Ascending aorta (tissue), 2 donors: ENCODE measurements at regions of chr7 and their contacts with region 1.

Region 1: DNA sequence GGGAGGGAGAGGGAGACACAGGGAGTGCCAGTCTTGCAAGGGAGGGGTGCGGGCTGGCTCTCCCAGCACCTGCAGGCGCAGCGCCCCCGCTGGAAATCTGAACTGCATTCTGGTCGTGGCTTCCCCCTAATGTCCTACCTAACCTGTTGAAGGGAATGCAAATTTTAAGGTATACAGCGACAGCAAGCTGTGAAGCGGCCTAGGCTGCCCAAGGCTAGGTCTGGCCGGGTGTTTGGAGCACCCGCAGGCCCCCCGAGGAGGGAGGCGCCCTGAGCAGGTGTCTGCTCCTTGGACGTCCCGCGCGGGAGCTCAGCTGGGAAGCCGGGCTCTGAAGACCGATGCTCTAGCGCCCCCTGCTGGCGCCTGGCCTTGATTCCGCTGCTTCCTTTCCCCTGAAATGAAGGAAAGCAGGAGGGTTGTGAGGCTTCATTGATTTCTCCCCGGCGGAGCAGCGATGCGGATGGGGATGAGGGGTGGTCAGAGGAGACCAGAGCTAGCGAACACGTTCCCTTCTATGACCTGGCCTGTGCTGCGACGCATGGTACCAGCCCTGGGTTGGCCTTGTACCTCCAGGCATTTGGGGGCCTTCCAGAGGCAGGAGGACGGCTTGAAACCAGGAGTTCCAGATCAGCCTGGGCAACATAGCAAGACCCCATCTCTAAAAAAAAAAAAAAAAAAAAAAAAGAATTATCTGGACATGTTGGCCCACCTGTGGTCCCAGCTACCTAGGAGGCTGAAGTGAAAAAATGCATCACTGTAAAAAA is 601.3 kb downstream of the GALNT17 start:
- DNase-seq: peak in 1 of 2 donors; percentile 78
- H3K4me3 ChIP-seq: peak overlapping the region in 1 of 2 donors; percentile 43
- H3K27ac ChIP-seq: no peak overlapping the region
- H3K4me1 ChIP-seq: no peaks in the 10 kb centered on the region
- H3K27me3 ChIP-seq: no peaks in the 10 kb centered on the region
- CTCF ChIP-seq: peak; percentile 79 to 92 (median 87)

Region 2: GRCh38 chr7:70829221-70830059 is 903.8 kb before region 1 on chr7:
- intact Hi-C with region 1: loop called (anchors 1 kb)
- DNase-seq: peak in 1 of 2 donors; percentile 70
- H3K4me3 ChIP-seq: peak overlapping the region in 1 of 2 donors; percentile 43
- H3K27ac ChIP-seq: no peak overlapping the region
- H3K4me1 ChIP-seq: no peaks in the 10 kb centered on the region
- H3K27me3 ChIP-seq: no peaks in the 10 kb centered on the region
- CTCF ChIP-seq: peak; percentile 58 to 90 (median 88)

Region 3: DNA sequence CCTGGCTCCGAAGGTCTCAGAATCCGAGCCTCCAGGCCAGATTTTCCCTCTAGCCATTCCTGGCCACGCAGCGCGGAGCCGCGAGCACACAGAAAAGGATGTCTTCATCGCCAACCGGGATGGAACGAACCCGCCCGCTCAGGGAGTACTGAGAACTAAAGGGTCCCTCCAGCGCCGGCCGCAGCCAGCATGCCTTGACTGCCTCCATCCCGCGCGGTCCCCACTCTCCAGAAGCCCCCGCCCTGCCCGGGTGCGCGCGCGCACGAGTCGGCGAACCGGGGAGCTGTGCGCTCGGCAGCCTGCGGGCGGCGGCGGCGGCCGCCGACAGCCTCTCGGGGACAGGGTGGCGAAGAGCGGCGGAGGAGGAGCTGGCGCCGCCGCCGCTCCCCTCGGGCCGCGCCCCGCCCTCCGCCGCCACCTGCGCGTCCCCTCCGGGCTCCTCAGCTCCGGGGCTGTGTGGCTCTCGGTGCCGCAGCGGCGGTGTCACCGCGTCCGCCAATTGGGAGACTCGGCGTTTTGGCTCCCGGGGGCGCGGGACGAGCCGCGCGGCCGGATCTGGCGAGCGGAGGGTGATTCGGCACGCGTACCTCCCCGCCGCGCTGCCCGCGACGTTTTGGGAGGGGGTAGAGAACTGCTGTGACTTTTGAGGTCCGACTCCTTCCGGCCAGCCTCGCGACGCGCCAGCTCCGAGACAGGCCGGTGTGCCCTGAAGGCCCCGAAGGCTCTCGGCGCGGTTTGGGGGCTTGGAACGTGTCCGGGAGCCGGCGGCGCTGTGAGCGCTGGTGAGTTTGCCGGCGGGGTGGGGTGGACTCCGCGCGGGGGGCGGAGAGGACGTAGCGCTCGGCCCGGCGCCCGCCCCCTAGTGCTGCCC is 601.8 kb before region 1 on chr7:
- intact Hi-C with region 1: loop called (anchors 5 kb)
- DNase-seq: peak in 1 of 2 donors; percentile 76
- H3K4me3 ChIP-seq: peak overlapping the region; percentile 77 to 81
- H3K27ac ChIP-seq: peak overlapping the region; percentile 46 to 73
- H3K4me1 ChIP-seq: peaks cover 0 to 3% of the 10 kb centered on the region in 2 donors
- H3K27me3 ChIP-seq: no peaks in the 10 kb centered on the region
- CTCF ChIP-seq: peak in 2 of 3 experiments; percentile 23 to 36

Region 4: DNA sequence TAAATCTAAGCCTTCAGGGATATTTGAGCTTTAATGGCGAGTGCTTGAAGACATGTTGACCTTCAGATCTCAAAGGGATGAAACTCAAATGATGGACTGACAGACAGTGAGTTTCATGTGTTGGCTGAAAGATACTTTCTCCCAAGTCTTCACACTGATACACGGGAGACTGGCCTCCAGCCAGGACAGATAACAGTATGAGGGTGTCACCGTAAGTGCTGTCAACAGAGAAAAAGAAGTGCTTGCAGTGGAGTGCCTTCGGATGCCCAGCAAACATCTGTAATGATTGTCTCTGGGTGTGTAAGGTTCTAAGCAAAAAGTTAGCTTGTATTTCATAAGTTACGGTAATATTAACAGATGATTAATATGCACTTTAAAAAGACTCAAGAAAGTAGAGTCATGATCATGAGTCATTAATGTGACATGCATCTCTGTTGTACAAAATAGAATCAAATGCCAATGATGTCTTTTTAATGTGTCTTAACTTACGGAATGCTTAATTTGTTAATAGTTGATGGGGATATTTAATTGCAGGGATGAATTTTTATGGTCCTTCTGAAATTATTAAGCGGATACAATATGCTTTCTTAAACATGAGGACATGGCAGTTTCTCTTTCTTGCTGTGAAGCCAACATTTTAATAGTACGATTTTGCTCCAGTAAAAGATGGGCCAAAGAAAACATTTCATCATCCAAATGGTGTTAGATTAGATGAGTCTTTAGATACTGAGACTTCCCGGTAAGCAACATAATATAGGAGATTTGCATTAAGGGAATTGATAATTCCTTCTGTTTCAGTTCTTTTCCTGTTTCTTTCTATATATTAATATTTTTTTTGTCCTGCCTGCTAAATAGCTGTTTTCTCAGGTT is 308.9 kb before region 1 on chr7:
- intact Hi-C with region 1: loop called (anchors 10 kb)
- DNase-seq: no peak
- H3K4me3 ChIP-seq: no peak overlapping the region
- H3K27ac ChIP-seq: no peak overlapping the region
- H3K4me1 ChIP-seq: no peaks in the 10 kb centered on the region
- H3K27me3 ChIP-seq: no peaks in the 10 kb centered on the region
- CTCF ChIP-seq: no peak

Region 5: DNA sequence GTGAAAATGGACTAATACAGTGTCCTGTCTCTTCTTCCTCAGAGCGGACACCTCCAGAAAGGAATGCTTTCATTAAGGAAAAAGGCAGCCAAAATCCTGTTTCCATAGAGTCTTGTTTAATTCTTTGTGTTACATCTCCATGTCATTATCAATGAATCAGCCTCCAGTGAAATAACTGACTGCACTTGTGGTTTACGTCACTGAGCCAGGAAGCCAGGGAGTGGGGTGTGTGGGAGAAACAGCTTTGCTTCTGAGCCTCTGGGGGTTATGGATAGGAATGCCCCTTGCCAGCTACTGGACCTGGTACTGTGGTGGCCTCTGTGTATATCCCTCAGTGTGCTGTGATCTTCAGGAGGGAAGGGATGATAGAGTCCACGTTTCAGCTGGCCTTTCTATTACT is 184.5 kb before region 1 on chr7:
- intact Hi-C with region 1: loop called (anchors 10 kb)
- DNase-seq: no peak
- H3K4me3 ChIP-seq: no peak overlapping the region
- H3K27ac ChIP-seq: no peak overlapping the region
- H3K4me1 ChIP-seq: no peaks in the 10 kb centered on the region
- H3K27me3 ChIP-seq: no peaks in the 10 kb centered on the region
- CTCF ChIP-seq: no peak

Region 6: GRCh38 chr7:71626206-71626605 is 107.1 kb before region 1 on chr7:
- intact Hi-C with region 1: no loop called
- DNase-seq: no peak
- H3K4me3 ChIP-seq: no peak overlapping the region
- H3K27ac ChIP-seq: no peak overlapping the region
- H3K4me1 ChIP-seq: peaks cover 0 to 6% of the 10 kb centered on the region in 2 donors
- H3K27me3 ChIP-seq: no peaks in the 10 kb centered on the region
- CTCF ChIP-seq: no peak

Region 7: DNA sequence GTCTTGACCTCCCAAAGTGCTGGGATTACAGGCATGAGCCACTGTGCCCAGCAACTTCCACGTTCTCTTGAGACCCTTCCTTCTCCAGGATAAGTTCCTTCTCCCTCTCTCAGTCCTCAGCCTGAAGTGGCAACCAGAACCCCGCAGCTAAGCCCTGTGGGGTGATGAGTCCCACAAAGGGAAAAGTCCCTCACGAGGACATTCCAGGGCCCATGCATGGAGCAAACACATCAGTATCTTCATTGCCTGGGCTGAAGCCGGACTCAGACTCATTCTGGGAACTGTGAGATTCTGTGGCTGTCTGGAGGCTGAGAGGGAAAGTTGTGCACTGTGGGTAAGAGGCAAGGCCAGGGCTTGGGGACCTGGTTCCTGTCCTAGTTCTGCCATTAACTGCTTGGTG is 21.5 kb after region 1 on chr7:
- intact Hi-C with region 1: no loop called
- DNase-seq: no peak
- H3K4me3 ChIP-seq: no peak overlapping the region
- H3K27ac ChIP-seq: no peak overlapping the region
- H3K4me1 ChIP-seq: no peaks in the 10 kb centered on the region
- H3K27me3 ChIP-seq: no peaks in the 10 kb centered on the region
- CTCF ChIP-seq: no peak